Testis (tissue), 5 donors: ENCODE measurements at regions of chr3 and their contacts with region 1.

Region 1: GRCh38 chr3:148955544-148956346 is 35.6 kb upstream of the GYG1 start:
- DNase-seq: peak; percentile 79
- H3K4me3 ChIP-seq: no peak overlapping the region
- H3K27ac ChIP-seq: peak overlapping the region; percentile 46 to 82
- H3K4me1 ChIP-seq: peaks cover 15% of the 10 kb centered on the region
- H3K27me3 ChIP-seq: no peaks in the 10 kb centered on the region
- CTCF ChIP-seq: peak; percentile 27 to 55 (median 44)
- POLR2A ChIP-seq: no peak

Region 2: GRCh38 chr3:149273096-149273751 is 317.5 kb after region 1 on chr3:
- intact Hi-C with region 1: loop called (anchors 10 kb)
- DNase-seq: peak; percentile 68
- H3K4me3 ChIP-seq: no peak overlapping the region
- H3K27ac ChIP-seq: no peak overlapping the region
- H3K4me1 ChIP-seq: no peaks in the 10 kb centered on the region
- H3K27me3 ChIP-seq: no peaks in the 10 kb centered on the region
- CTCF ChIP-seq: peak; percentile 82 to 97 (median 92)
- POLR2A ChIP-seq: no peak

Region 3: GRCh38 chr3:149473357-149474249 is 517.9 kb after region 1 on chr3:
- intact Hi-C with region 1: loop called (anchors 10 kb)
- DNase-seq: no peak
- H3K4me3 ChIP-seq: no peak overlapping the region
- H3K27ac ChIP-seq: no peak overlapping the region
- H3K4me1 ChIP-seq: no peaks in the 10 kb centered on the region
- H3K27me3 ChIP-seq: no peaks in the 10 kb centered on the region
- CTCF ChIP-seq: no peak
- POLR2A ChIP-seq: no peak